GM10248 (cell line): ENCODE measurements at regions of chr6 and their contacts with region 1.

Region 1: DNA sequence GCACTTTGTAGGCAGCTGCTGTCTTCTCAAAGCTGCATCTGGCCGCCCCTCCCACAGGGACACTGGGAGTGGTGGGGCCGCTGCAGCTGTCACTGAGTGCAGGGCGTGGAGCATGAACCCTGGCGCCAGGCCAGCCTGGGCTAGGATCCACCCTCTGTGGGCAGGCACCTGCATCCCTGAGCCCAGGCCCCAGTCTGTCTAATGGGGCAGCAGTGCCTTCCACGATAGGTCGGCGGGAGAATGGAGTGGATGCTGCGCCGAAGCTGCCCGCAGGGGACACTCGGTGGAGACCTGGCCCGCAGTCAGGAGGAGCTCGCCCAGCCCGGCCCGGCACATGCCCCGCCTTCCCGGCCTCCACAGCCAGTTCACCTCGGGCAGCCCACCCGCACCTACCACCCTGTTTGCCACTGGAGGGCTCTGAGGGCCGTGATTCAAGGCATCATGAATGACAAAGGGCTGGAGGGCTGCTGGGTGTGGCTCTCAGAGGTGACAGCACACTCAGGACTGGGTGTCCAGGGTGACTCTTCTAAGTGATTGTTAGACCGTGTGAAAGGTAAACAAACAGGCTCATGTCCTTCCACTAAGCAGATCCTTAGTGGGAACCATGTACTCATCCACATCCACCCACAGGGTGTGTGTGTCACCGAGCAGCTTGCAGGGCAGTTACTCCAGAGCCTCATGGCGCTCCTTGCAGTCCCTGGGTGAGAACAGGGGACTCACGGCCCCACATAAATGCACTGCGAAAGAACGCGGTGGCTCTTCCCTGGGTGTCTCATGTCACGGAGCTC is 133.9 kb downstream of the AGPAT4 start:
- DNase-seq: no peak
- CTCF ChIP-seq: peak; percentile 35

Region 2: GRCh38 chr6:161128680-161129196 is 11.2 kb before region 1 on chr6:
- CTCF ChIA-PET with region 1: interaction called, 12 read pairs
- POLR2A ChIA-PET with region 1: no interaction called
- DNase-seq: no peak
- CTCF ChIP-seq: no peak

Region 3: DNA sequence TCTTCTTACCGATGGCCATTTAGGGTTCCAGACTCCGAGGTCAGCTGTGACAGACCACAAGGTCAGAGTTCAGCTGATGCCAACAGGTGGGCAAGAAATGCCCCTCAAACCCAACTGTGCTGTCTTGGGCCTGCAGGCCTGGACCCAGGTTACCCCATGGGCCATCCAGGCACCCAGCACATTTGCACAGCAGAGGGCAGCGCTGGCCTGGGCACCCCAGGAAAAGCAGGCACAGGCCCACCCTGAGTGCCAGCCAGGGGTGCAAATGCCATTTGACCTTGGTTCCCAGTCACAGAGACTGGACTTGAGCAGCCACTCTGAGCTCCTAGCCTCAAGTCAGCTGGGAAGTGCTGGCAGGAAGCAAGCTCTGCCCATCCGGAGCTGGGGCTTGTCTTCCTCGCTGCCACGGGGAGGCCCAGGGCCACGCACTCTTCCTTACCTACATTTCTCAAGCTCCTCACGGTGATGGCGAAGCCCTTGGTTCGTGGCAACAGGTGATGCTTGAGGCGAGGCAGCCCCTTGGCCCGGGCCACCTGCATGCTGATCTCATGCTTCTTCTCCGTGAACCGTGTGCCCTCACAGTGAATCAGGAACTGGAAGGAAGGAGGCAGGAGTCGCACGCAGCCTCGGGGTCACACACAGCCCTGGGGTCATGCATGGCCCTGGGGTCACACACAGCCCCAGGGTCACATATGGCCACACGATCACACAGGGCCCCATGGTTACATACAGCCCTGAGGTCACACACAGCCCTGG is 13.1 kb after region 1 on chr6:
- CTCF ChIA-PET with region 1: interaction called, 24 read pairs
- POLR2A ChIA-PET with region 1: no interaction called
- DNase-seq: peak; percentile 44
- CTCF ChIP-seq: peak; percentile 33